ENCODE measurements at regions of chr7 and their contacts with region 1.

Region 1: DNA sequence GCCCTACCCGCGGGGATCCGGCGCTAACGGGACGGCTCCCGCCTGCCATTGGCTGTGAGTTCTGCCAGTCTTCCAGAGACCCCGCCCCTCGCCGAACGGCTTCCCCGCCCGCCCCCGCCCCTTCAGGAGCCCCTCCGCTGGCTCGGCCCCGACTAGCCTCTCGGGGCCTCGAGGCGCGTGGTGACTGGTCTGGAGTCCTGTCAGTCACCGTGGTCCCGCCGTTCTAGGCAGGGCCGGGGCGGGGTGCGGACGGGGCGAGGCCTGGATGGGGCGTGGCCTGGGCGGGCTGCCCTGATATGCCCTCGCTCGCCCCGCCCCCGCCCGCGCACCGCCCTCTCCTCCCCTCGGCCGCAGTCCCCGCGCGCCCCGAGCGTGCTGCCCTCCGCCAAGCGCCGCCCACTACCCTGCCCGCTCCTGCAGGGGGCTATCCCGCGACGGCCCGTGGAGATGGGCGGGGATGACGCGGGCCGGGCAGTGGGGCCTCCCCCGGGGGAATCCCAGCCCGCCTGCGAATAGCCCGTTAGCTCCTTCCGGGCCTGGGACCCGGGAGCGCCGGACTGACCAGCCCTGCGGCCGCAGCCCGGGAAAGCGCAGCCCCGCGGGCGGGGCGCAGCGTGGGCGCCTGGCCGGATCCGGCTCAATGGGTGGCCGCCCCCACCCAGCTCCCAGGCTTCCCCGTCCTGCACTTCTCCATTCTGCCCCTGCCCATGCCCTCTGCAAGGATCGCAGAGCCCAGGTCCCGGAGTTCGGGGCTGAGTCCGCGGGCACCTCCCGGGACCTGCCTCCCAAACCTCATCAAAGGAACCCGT is 450 bp upstream of the HIP1 start:
- DNase-seq: peak; percentile 98 to 100
- H3K4me3 ChIP-seq: peak overlapping the region; percentile 79 to 81
- H3K27ac ChIP-seq: peak overlapping the region; percentile 76 to 84
- H3K4me1 ChIP-seq: peaks cover 0 to 18% of the 10 kb centered on the region in 2 donors
- H3K27me3 ChIP-seq: no peaks in the 10 kb centered on the region
- CTCF ChIP-seq: peak in 1 of 3 experiments; percentile 60

Region 2: DNA sequence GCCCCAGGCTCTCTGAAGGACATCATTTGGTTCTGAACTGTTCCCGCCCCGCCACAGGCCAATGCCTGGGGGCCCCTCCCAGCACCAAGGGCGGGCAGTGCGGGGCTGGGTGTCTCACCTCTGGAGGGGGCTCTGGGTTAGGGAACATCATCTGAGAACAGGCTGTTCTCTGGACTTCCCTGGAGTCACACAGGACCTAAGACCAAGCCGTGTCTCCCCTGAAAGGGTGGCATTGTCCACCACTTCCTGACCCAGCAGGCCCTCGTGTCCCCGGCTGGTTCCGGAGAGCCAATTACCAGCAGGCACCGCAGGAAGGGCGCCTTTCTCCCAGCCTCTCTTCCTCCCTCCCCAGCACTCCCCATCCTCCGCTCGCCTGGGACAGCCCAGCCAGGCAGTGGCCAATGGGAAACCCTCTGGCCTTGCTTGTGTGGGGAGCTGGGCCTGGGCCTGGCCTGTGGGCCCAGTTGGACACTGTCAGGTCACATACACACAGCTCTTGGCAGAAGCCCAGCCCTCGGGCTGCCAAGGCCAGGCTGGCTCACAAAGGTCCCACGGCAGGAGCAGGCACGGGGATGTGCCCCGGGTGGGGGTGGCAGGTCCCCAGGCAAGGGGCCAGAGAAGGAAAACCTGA is 127.5 kb before region 1 on chr7:
- intact Hi-C with region 1: loop called (anchors 1 kb)
- DNase-seq: peak; percentile 54 to 91
- H3K4me3 ChIP-seq: peak overlapping the region; percentile 42
- H3K27ac ChIP-seq: peak overlapping the region; percentile 68 to 83
- H3K4me1 ChIP-seq: peaks cover 0 to 12% of the 10 kb centered on the region in 2 donors
- H3K27me3 ChIP-seq: no peaks in the 10 kb centered on the region
- CTCF ChIP-seq: peak in 1 of 3 experiments; percentile 8

Region 3: DNA sequence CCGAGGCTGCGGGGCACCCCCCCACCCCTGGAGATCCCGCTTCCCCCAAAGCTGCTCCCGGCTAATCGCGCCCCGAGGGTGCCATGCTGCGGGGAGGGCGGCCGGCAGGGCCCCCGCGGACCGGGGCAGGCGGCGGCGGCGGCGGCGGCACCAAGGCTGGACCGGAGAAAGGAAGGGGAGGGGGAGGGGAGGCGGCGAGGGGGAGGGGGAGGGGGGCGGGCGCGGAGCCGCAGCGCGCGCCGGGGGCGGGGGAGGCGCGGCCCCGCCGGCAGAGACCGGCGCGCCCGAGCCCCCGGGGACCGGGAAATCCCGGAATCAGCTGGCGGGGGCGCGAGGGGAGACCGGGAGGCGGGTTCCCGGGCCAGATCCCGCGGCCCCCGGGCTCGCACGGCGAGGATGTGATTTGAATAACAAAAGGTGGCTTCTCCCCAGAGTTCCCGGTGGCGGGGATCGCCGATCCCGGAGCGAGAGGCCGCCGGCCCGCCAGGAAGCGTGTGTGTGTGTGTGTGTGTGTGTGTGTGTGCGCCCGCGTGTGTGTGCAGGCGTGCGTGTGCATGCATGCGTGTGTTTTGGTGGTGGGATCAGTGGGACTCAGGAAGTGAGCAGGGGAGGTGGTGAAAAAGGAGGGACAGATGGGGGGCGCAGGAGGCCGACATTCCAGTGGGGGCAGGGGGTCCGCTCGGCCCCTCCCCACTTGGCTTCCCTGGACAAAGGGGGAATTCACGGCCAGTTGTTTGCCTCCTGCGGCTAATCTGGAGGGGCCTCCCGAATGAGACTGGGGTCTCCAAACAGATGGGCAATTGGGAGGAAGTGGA is 99.9 kb before region 1 on chr7:
- intact Hi-C with region 1: loop called (anchors 1 kb)
- DNase-seq: peak in 1 of 2 donors; percentile 73
- H3K4me3 ChIP-seq: peak overlapping the region; percentile 75 to 86
- H3K27ac ChIP-seq: peak overlapping the region; percentile 81 to 89
- H3K4me1 ChIP-seq: peaks cover 4 to 27% of the 10 kb centered on the region in 2 donors
- H3K27me3 ChIP-seq: no peaks in the 10 kb centered on the region
- CTCF ChIP-seq: no peak

Region 4: DNA sequence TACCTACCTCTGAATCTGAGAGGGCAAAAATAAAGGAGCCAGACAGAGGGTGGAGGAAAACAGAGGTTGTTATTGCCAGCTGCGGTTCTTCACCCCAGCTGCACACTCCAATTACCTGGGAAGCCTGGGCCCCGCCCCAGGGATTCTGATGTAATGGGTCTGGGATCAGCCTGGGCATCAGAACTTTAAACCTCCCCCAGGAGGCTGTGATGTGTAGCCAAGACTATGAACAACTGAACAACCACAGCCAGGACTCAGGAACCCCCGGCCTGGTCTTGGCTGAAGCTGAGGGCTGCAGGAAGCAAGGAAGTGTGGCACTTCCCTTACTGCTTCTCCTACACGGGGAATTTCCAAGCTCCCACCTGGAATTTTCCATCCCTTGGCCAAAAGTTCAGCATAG is 89.7 kb before region 1 on chr7:
- intact Hi-C with region 1: loop called (anchors 2 kb)
- DNase-seq: no peak
- H3K4me3 ChIP-seq: no peak overlapping the region
- H3K27ac ChIP-seq: peak overlapping the region; percentile 74 to 82
- H3K4me1 ChIP-seq: peaks cover 6 to 19% of the 10 kb centered on the region in 2 donors
- H3K27me3 ChIP-seq: no peaks in the 10 kb centered on the region
- CTCF ChIP-seq: no peak

Region 5: GRCh38 chr7:75711656-75712514 is 27.3 kb before region 1 on chr7:
- intact Hi-C with region 1: loop called (anchors 1 kb)
- DNase-seq: peak in 1 of 2 donors; percentile 74
- H3K4me3 ChIP-seq: peak overlapping the region; percentile 25 to 46
- H3K27ac ChIP-seq: peak overlapping the region; percentile 94 to 97
- H3K4me1 ChIP-seq: peaks cover 9 to 48% of the 10 kb centered on the region in 2 donors
- H3K27me3 ChIP-seq: no peaks in the 10 kb centered on the region
- CTCF ChIP-seq: peak in 1 of 3 experiments; percentile 5

Measured in ascending aorta (tissue), 2 donors.